ENCODE measurements at regions of chr4 and their contacts with region 1.

Region 1: DNA sequence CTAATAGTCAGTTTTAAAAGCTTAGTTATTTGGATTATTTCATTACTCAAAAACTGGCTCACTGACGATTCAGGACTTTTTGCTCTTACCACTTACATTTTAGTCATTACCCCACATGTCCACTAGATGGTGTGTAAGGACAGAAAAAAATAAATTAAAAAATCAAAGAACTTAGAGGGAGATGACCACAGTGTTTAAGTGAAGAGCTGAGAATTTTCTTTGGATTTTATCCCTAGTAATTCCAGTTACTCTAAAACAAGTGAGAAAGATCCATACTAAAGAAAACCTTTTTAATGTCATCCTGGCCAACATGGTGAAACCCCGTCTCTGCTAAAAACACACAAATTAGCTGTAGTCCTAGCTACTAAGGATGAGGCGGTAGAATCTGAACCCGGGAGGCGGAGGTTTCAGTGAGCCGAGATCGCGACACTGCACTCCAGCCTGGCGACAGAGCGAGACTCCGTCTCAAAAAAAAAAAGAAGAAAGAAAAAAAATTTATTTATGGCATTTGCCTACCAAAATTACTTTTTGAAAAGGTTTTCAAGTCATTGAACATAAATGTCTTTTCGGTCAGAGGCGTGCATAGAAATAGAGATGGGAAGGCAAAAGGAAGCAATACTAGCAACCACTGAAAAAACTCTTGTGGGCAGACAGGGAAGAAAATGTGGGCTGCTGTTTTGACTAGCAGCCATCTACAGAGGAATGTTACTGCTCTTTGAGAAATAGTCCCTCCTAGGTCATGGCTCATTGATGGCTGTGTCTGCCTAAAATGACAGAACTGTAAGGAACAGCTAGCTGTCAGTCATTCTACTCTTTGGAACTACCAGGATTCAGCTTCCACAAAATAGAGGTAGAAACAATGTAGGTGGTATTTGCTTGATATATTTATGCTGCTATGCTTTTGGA is 26.6 kb upstream of the TMPRSS11B start:
- H3K4me3 Mint-ChIP-seq: peak overlapping the region; percentile 46
- H3K27ac Mint-ChIP-seq: no peak overlapping the region
- H3K4me1 Mint-ChIP-seq: no peaks in the 10 kb centered on the region
- H3K27me3 Mint-ChIP-seq: peaks cover 3% of the 10 kb centered on the region

Region 2: DNA sequence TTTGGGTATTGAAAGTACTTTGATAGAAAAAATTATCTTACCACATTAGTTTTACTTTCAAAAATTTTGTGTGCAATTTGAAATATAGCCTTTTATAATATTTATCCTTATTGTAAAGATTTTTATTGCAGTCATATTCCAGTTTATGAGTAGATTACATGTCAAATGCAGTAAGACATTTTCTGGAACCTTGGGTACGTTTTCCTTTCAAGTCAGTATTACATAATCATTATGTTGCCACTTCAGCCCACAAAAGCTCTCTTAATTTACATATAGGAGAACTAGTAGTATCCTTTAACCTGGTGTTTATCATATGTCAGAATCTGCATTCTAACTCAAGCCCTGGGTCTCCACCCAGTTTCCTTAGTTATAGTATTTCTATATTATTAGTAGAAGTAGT is 825.3 kb before region 1 on chr4:
- intact Hi-C with region 1: no loop called
- H3K4me3 Mint-ChIP-seq: no peak overlapping the region
- H3K27ac Mint-ChIP-seq: no peak overlapping the region
- H3K4me1 Mint-ChIP-seq: no peaks in the 10 kb centered on the region
- H3K27me3 Mint-ChIP-seq: no peaks in the 10 kb centered on the region

Region 3: DNA sequence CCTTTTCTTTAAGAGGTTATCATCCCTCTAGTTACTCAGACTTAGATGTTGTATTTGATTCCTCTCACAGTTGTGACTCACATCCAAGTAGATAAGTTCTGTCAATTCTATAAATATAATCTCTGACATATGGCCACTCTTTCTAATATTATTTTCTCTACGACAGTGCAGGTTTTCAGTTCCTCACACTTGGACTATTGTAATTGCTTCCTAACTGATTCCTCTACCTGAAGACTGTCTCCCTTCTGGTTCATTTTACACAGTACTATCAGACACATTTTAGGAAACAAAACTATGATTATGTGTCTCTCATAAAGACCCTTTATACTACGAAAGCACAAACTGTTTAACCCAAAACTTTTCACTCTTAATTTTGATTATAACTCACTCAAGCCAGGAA is 486.6 kb before region 1 on chr4:
- intact Hi-C with region 1: no loop called
- H3K4me3 Mint-ChIP-seq: no peak overlapping the region
- H3K27ac Mint-ChIP-seq: no peak overlapping the region
- H3K4me1 Mint-ChIP-seq: no peaks in the 10 kb centered on the region
- H3K27me3 Mint-ChIP-seq: no peaks in the 10 kb centered on the region

Region 4: GRCh38 chr4:68375667-68376559 is 103.8 kb after region 1 on chr4:
- intact Hi-C with region 1: loop called (anchors 1 kb)
- H3K4me3 Mint-ChIP-seq: peak overlapping the region; percentile 34
- H3K27ac Mint-ChIP-seq: no peak overlapping the region
- H3K4me1 Mint-ChIP-seq: peaks cover 17% of the 10 kb centered on the region
- H3K27me3 Mint-ChIP-seq: peaks cover 6% of the 10 kb centered on the region

Region 5: GRCh38 chr4:69167300-69167699 is 895.2 kb after region 1 on chr4:
- intact Hi-C with region 1: loop called (anchors 5 kb)
- H3K4me3 Mint-ChIP-seq: no peak overlapping the region
- H3K27ac Mint-ChIP-seq: no peak overlapping the region
- H3K4me1 Mint-ChIP-seq: no peaks in the 10 kb centered on the region
- H3K27me3 Mint-ChIP-seq: no peaks in the 10 kb centered on the region